IMR-90 (cell line): ENCODE measurements at regions of chr18 and their contacts with region 1.

Region 1: DNA sequence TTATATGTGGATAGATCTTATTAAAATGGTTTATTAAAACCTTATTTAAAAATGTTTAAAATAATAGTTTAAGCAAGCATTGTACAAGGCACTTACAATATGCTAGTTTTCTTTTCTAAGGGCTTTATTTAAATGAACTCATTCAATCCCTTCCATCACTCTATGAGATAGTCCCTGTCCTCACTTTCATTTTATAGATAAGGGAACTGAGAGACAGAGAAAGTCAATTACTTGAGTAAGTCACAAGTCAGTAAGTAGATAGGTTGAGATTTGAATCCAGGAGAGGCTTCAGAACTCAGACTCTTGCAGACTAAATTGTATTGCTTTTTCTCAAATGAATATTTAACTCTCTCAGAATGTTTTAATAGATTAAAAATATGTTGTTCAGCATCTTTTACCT is 95.2 kb downstream of the KLHL14 start:
- DNase-seq: no peak
- ATAC-seq: no peak
- H3K4me3 ChIP-seq: no peak overlapping the region
- H3K27ac ChIP-seq: no peak overlapping the region
- H3K4me1 ChIP-seq: no peaks in the 10 kb centered on the region
- H3K27me3 ChIP-seq: no peaks in the 10 kb centered on the region
- CTCF ChIP-seq: no peak
- POLR2A ChIP-seq: no peak
- RAD21 ChIP-seq: no peak

Region 2: DNA sequence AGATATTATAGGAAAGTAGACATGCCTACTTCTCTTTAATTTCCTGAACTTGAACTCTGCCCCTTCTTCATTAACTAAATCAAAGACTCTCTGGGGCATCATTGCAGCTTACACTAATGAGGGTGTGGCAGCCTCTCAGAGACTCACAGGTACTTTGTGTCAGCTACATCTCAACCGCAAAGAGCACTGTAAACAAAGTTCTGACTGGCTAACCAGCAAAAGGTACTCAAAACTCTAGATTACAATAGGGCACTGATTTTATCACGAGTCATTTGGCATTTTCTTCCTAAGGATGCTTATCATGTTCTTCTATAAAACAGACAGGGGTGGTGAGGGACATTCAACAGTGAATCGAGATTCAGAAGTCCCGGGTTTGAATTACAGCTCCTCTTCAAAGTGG is 1298.7 kb before region 1 on chr18:
- CTCF ChIA-PET with region 1: no interaction called
- POLR2A ChIA-PET with region 1: no interaction called
- dilution Hi-C with region 1: no loop called
- in situ Hi-C with region 1: no loop called
- intact Hi-C with region 1: loop called (anchors 5 kb)
- DNase-seq: no peak
- ATAC-seq: no peak
- H3K4me3 ChIP-seq: no peak overlapping the region
- H3K27ac ChIP-seq: no peak overlapping the region
- H3K4me1 ChIP-seq: no peaks in the 10 kb centered on the region
- H3K27me3 ChIP-seq: no peaks in the 10 kb centered on the region
- CTCF ChIP-seq: no peak
- POLR2A ChIP-seq: no peak
- RAD21 ChIP-seq: no peak

Region 3: DNA sequence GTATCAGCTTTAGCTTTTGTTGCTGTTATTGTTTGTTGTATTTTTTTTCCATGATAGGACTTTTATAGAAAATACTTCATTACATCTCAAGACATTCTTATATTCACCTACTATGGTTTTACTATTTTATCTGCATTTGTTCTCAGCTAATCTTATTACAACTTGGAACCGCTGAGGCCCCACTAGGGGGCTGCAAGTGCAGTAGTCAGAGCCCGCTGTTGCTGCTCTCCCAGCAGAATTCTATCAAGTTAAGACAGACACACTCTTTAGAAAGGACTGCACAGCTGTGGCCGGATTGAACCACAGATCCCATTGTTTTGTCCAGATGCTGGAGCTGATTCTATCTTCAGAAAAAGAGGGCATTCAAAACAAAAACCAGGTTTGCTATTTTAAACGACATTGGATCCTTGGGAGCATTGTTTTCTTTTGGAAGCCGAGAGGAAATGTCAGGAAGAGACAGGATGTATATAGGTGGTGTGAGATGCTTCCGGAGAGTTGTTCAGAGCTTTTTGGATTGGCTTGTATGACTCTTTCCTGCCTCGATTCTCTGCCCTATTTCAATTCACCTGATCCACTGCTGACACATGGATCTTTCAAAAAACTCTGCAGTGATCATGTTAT is 101.2 kb before region 1 on chr18:
- CTCF ChIA-PET with region 1: no interaction called
- POLR2A ChIA-PET with region 1: no interaction called
- dilution Hi-C with region 1: no loop called
- in situ Hi-C with region 1: no loop called
- intact Hi-C with region 1: no loop called
- DNase-seq: peak; percentile 5
- ATAC-seq: no peak
- H3K4me3 ChIP-seq: no peak overlapping the region
- H3K27ac ChIP-seq: no peak overlapping the region
- H3K4me1 ChIP-seq: no peaks in the 10 kb centered on the region
- H3K27me3 ChIP-seq: no peaks in the 10 kb centered on the region
- CTCF ChIP-seq: 0 out of 2 replicates have a peak, but pooled peaks have one; percentile 21
- POLR2A ChIP-seq: no peak
- RAD21 ChIP-seq: no peak

Region 4: DNA sequence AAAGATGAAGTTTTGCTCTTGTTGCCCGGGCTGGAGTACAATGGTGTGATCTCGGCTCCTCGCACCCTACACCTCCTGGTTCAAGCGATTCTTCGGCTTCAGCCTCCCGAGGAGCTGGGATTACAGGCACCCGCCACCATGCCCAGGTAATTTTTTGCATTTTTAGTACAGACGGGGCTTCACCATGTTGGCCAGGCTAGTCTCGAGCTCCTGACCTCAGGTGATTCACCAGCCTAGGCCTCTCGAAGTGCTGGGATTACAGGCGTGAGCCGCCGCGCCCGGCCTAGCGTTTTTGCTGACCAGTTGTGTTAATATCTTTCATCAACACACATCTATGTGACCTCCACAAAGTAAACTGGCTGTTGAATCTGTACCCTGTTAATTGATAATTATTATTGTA is 144.6 kb after region 1 on chr18:
- CTCF ChIA-PET with region 1: no interaction called
- POLR2A ChIA-PET with region 1: no interaction called
- dilution Hi-C with region 1: no loop called
- in situ Hi-C with region 1: no loop called
- intact Hi-C with region 1: no loop called
- DNase-seq: no peak
- ATAC-seq: no peak
- H3K4me3 ChIP-seq: no peak overlapping the region
- H3K27ac ChIP-seq: no peak overlapping the region
- H3K4me1 ChIP-seq: no peaks in the 10 kb centered on the region
- H3K27me3 ChIP-seq: no peaks in the 10 kb centered on the region
- CTCF ChIP-seq: no peak
- POLR2A ChIP-seq: no peak
- RAD21 ChIP-seq: no peak